MCF 10A (cell line): ENCODE measurements at regions of chr10 and their contacts with region 1.

Region 1: DNA sequence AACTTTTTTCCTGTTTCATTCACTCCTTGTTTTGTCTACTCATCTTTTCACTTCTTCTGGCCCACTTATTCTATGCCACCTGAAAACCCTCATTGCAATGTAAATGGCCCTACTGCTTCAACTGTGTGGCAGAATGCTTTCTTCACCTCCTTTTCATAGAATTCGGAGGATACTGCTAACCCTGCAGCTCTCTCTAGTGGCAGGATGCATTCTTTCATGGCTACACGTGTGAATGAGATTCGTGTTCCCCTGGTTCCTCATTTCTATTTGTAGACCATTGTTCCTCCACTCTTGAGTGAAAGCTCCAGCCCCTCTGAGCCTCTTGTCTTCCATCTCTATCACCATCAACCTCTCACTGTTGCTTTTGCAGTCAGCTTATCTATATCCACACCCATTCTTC is 20.9 kb upstream of the CYP26C1 start:
- DNase-seq: peak; percentile 54
- H3K4me3 Mint-ChIP-seq: no peak overlapping the region
- H3K27ac Mint-ChIP-seq: no peak overlapping the region
- H3K4me1 Mint-ChIP-seq: no peaks in the 10 kb centered on the region
- H3K27me3 Mint-ChIP-seq: no peaks in the 10 kb centered on the region
- CTCF ChIP-seq: peak; percentile 65

Region 2: DNA sequence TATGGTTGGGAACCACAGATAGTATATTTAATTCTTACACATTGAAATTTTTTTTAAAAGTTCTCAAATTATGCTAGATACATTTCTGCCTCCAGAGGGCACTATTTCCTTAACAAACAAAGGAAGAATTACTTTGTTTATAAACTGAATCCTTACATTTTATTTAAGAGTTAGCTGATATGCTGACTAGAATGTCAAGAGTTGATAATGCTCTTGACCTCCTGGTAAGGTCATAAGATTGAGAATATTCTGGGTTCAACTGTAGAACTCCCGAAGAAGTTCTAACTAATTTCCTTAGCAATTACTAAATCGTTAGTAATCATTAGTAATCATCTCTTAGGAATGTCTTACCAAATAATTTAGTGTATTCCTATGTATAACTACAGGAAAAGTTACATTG is 74.4 kb before region 1 on chr10:
- CTCF ChIA-PET with region 1: interaction called, 8 read pairs
- POLR2A ChIA-PET with region 1: interaction called, 3 read pairs
- intact Hi-C with region 1: loop called (anchors 1 kb)
- DNase-seq: peak; percentile 53
- H3K4me3 Mint-ChIP-seq: no peak overlapping the region
- H3K27ac Mint-ChIP-seq: peak overlapping the region; percentile 9
- H3K4me1 Mint-ChIP-seq: no peaks in the 10 kb centered on the region
- H3K27me3 Mint-ChIP-seq: no peaks in the 10 kb centered on the region
- CTCF ChIP-seq: peak; percentile 57

Region 3: GRCh38 chr10:93088466-93088865 is 48.7 kb after region 1 on chr10:
- CTCF ChIA-PET with region 1: no interaction called
- POLR2A ChIA-PET with region 1: no interaction called
- intact Hi-C with region 1: no loop called
- DNase-seq: no peak
- H3K4me3 Mint-ChIP-seq: no peak overlapping the region
- H3K27ac Mint-ChIP-seq: no peak overlapping the region
- H3K4me1 Mint-ChIP-seq: no peaks in the 10 kb centered on the region
- H3K27me3 Mint-ChIP-seq: no peaks in the 10 kb centered on the region
- CTCF ChIP-seq: no peak

Region 4: DNA sequence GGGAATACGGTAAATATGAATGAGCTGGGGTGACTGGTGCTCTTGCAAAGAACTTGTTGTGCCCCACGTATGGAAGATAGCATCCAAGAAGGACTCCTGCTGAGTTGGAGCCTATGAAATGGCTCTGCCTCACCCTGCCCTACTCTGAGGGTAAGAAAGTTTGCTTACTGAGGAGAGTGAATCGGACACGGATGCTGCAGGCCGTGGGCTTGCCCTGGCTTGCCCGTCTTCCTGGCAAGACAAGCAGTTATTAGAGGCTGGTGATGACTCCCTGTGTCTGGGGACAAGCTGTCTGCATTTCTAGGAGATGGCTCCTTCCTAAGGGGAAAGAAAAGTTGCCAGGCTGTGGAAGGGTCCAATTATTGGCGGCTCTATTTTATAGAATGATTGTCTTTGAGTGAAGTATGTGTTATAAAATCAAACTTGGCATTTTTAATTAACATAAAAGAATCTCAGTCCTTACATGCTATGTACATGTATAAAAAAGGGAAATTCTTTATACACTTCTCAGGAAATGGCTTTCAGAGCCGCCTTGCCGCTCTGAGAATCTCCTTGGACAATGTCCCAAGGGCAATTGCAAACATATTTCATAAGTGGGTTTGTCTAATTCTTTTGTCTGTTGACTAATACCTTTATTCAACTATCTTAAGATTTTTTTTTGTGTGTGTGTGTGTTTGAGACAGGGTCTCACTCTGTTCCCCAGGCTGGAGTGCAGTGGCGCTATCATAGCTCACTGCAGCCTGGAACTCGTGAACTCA is 98.6 kb after region 1 on chr10:
- CTCF ChIA-PET with region 1: no interaction called
- POLR2A ChIA-PET with region 1: no interaction called
- intact Hi-C with region 1: no loop called
- DNase-seq: peak; percentile 84
- H3K4me3 Mint-ChIP-seq: no peak overlapping the region
- H3K27ac Mint-ChIP-seq: peak overlapping the region; percentile 92
- H3K4me1 Mint-ChIP-seq: peaks cover 8% of the 10 kb centered on the region
- H3K27me3 Mint-ChIP-seq: no peaks in the 10 kb centered on the region
- CTCF ChIP-seq: no peak